Vagina (tissue), 2 donors: ENCODE measurements at regions of chr10 and their contacts with region 1.

Region 1: GRCh38 chr10:71771821-71772617 is 1.3 kb downstream of the VSIR start:
- DNase-seq: no peak
- H3K4me3 ChIP-seq: peak overlapping the region; percentile 83 to 90
- H3K27ac ChIP-seq: peak overlapping the region; percentile 99
- H3K4me1 ChIP-seq: peaks cover 74% of the 10 kb centered on the region
- H3K27me3 ChIP-seq: no peaks in the 10 kb centered on the region
- CTCF ChIP-seq: no peak
- POLR2A ChIP-seq: peak in 1 of 2 donors; percentile 67

Region 2: GRCh38 chr10:71713135-71714030 is 58.6 kb before region 1 on chr10:
- intact Hi-C with region 1: loop called (anchors 5 kb)
- DNase-seq: peak in 1 of 2 donors; percentile 97
- H3K4me3 ChIP-seq: no peak overlapping the region
- H3K27ac ChIP-seq: peak overlapping the region; percentile 95
- H3K4me1 ChIP-seq: peaks cover 49% of the 10 kb centered on the region
- H3K27me3 ChIP-seq: no peaks in the 10 kb centered on the region
- CTCF ChIP-seq: no peak
- POLR2A ChIP-seq: peak in 1 of 2 donors; percentile 29